ENCODE measurements at regions of chr12 and their contacts with region 1.

Region 1: DNA sequence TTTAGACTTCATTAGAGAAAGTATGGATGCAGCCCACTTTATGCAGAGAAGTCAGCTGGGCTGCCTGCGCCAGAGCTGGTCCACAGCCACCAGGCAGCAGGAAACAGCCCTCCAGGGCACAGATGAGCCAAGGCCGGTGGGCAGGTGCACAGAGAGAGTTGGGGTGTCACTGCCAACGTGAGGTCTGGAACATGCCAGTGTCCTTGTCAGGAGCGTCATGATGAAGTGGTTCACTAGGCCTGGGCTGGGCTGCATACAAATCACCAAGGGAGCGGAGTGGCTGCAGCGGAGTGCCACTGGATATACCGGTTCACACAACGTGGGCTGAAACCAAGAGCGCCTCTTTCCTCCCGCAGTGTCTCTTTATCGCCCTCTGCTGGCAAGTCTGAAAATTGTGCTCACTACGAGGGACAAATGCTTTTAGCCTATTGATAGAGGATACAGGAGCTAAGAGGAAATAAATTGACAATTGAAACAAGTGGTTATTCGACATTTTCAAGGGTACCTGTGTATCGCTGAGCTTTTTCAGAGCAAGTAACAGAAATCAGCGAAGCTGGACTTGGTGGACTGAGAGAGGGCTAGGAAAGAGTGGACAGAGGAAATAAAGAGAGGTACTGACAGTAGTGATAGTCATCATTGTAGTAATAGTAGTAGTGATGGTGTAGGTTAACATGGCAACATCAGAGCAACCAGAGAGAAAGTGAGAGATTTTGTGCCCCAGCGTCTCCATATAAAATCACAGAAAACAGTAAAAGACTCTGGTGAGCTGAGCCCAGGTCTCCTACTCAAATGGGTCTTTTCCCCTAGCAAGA is 52.0 kb upstream of the ITPR2 start:
- DNase-seq: peak; percentile 77
- ATAC-seq: peak; percentile 99
- H3K4me3 ChIP-seq: no peak overlapping the region
- H3K27ac ChIP-seq: no peak overlapping the region
- H3K4me1 ChIP-seq: no peaks in the 10 kb centered on the region
- H3K27me3 ChIP-seq: peaks cover 10% of the 10 kb centered on the region
- CTCF ChIP-seq: peak; percentile 93
- POLR2A ChIP-seq: no peak
- RAD21 ChIP-seq: peak; percentile 89

Region 2: DNA sequence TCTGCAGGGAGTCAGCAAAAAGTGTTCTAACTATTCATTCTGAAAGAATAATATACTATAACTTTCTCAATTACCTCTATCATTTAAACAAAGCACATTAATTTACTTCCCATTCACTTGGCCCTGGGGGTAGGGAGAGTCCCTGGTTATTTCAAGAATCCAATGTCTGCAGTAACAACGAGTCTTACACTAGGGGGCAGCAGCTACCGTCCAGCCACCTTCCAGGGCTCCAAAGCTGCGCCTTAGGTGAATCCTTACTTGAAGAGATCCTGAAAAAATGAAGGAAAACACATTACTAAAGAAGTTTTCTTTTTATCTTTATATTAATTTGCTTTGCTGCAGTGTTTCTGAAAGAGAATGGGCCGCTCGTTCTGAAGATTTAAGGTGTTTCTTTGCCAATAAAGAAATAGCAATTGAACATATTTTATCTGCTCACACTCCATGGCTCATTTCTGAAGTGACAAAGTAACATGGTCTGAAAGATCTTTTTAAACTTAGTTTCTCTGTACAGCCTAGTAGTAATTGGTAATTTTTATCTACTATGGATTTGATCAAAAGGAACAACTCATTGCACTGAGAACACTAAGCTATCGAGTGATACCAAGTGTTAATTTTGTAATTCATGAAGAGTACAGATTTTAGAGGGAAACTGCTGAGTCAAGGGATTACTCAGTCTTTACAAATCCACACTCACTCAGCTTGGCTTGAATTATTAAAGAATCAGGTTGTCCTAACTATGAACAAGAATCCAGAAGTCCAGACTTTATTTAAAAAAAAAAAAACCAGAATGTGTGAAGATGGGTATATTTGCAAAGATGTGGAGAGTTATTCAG is 787.7 kb before region 1 on chr12:
- CTCF ChIA-PET with region 1: no interaction called
- POLR2A ChIA-PET with region 1: no interaction called
- dilution Hi-C with region 1: no loop called
- in situ Hi-C with region 1: no loop called
- intact Hi-C with region 1: loop called (anchors 10 kb)
- DNase-seq: peak; percentile 76
- ATAC-seq: peak; percentile 99
- H3K4me3 ChIP-seq: no peak overlapping the region
- H3K27ac ChIP-seq: no peak overlapping the region
- H3K4me1 ChIP-seq: no peaks in the 10 kb centered on the region
- H3K27me3 ChIP-seq: no peaks in the 10 kb centered on the region
- CTCF ChIP-seq: peak; percentile 94
- POLR2A ChIP-seq: 0 out of 2 replicates have a peak, but pooled peaks have one; percentile 41
- RAD21 ChIP-seq: peak; percentile 94

Region 3: GRCh38 chr12:26443309-26443708 is 441.7 kb before region 1 on chr12:
- CTCF ChIA-PET with region 1: no interaction called
- POLR2A ChIA-PET with region 1: no interaction called
- dilution Hi-C with region 1: no loop called
- in situ Hi-C with region 1: no loop called
- intact Hi-C with region 1: loop called (anchors 10 kb)
- DNase-seq: no peak
- ATAC-seq: no peak
- H3K4me3 ChIP-seq: no peak overlapping the region
- H3K27ac ChIP-seq: no peak overlapping the region
- H3K4me1 ChIP-seq: no peaks in the 10 kb centered on the region
- H3K27me3 ChIP-seq: no peaks in the 10 kb centered on the region
- CTCF ChIP-seq: no peak
- POLR2A ChIP-seq: no peak
- RAD21 ChIP-seq: no peak

Region 4: GRCh38 chr12:26629864-26630263 is 255.1 kb before region 1 on chr12:
- CTCF ChIA-PET with region 1: interaction called, 3 read pairs
- POLR2A ChIA-PET with region 1: no interaction called
- dilution Hi-C with region 1: no loop called
- in situ Hi-C with region 1: no loop called
- intact Hi-C with region 1: loop called (anchors 10 kb)
- DNase-seq: peak; percentile 70
- ATAC-seq: peak; percentile 71
- H3K4me3 ChIP-seq: no peak overlapping the region
- H3K27ac ChIP-seq: no peak overlapping the region; the same call in 1 of the 2 replicates
- H3K4me1 ChIP-seq: peaks cover 11% of the 10 kb centered on the region
- H3K27me3 ChIP-seq: no peaks in the 10 kb centered on the region
- CTCF ChIP-seq: peak; percentile 75
- POLR2A ChIP-seq: no peak
- RAD21 ChIP-seq: peak; percentile 77

Region 5: DNA sequence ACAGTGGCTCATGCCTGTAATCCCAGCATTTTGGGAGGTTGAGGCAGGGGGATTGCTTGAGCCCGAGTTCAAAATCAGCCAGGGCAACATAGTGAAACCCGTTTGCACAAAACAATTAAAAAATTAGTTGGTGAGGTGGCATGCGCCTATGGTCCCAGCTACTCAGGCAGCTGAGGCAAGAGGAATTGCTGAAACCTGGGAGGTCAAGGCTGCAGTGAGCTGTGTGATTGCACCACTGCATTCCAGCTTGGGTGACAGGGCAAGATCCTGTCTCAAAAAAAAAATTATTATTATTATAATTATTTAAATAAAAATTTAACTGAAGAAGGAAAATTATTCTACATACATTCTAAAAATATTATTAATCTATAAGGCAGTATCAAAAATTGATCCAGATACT is 216.1 kb before region 1 on chr12:
- CTCF ChIA-PET with region 1: no interaction called
- POLR2A ChIA-PET with region 1: no interaction called
- dilution Hi-C with region 1: no loop called
- in situ Hi-C with region 1: no loop called
- intact Hi-C with region 1: no loop called
- DNase-seq: no peak
- ATAC-seq: no peak
- H3K4me3 ChIP-seq: no peak overlapping the region
- H3K27ac ChIP-seq: no peak overlapping the region
- H3K4me1 ChIP-seq: no peaks in the 10 kb centered on the region
- H3K27me3 ChIP-seq: no peaks in the 10 kb centered on the region
- CTCF ChIP-seq: no peak
- POLR2A ChIP-seq: no peak
- RAD21 ChIP-seq: no peak

Region 6: GRCh38 chr12:26701604-26702215 is 183.3 kb before region 1 on chr12:
- CTCF ChIA-PET with region 1: interaction called, 3 read pairs
- POLR2A ChIA-PET with region 1: no interaction called
- dilution Hi-C with region 1: no loop called
- in situ Hi-C with region 1: no loop called
- intact Hi-C with region 1: loop called (anchors 5 kb)
- DNase-seq: peak; percentile 70
- ATAC-seq: peak; percentile 54
- H3K4me3 ChIP-seq: no peak overlapping the region
- H3K27ac ChIP-seq: no peak overlapping the region
- H3K4me1 ChIP-seq: peaks cover 7% of the 10 kb centered on the region
- H3K27me3 ChIP-seq: no peaks in the 10 kb centered on the region
- CTCF ChIP-seq: peak; percentile 74
- POLR2A ChIP-seq: no peak
- RAD21 ChIP-seq: peak; percentile 73

Region 7: GRCh38 chr12:26723379-26724308 is 161.3 kb before region 1 on chr12:
- CTCF ChIA-PET with region 1: no interaction called
- POLR2A ChIA-PET with region 1: no interaction called
- dilution Hi-C with region 1: no loop called
- in situ Hi-C with region 1: no loop called
- intact Hi-C with region 1: loop called (anchors 5 kb)
- DNase-seq: peak; percentile 78
- ATAC-seq: peak; percentile 91
- H3K4me3 ChIP-seq: peak overlapping the region; percentile 17; the same call in 1 of the 2 replicates
- H3K27ac ChIP-seq: peak overlapping the region; percentile 12; the same call in 1 of the 2 replicates
- H3K4me1 ChIP-seq: peaks cover 4% of the 10 kb centered on the region
- H3K27me3 ChIP-seq: no peaks in the 10 kb centered on the region
- CTCF ChIP-seq: no peak
- POLR2A ChIP-seq: no peak
- RAD21 ChIP-seq: no peak

Region 8: GRCh38 chr12:26853303-26854030 is 31.5 kb before region 1 on chr12:
- CTCF ChIA-PET with region 1: no interaction called
- POLR2A ChIA-PET with region 1: no interaction called
- dilution Hi-C with region 1: no loop called
- in situ Hi-C with region 1: no loop called
- intact Hi-C with region 1: loop called (anchors 1 kb)
- DNase-seq: peak; percentile 56
- ATAC-seq: peak; percentile 94
- H3K4me3 ChIP-seq: no peak overlapping the region
- H3K27ac ChIP-seq: no peak overlapping the region
- H3K4me1 ChIP-seq: 0 out of 2 replicates have a peak, but pooled peaks cover 5% of the 10 kb centered on the region
- H3K27me3 ChIP-seq: peaks cover 8% of the 10 kb centered on the region; the same call in 1 of the 2 replicates
- CTCF ChIP-seq: peak; percentile 82
- POLR2A ChIP-seq: no peak
- RAD21 ChIP-seq: peak; percentile 71

Region 9: DNA sequence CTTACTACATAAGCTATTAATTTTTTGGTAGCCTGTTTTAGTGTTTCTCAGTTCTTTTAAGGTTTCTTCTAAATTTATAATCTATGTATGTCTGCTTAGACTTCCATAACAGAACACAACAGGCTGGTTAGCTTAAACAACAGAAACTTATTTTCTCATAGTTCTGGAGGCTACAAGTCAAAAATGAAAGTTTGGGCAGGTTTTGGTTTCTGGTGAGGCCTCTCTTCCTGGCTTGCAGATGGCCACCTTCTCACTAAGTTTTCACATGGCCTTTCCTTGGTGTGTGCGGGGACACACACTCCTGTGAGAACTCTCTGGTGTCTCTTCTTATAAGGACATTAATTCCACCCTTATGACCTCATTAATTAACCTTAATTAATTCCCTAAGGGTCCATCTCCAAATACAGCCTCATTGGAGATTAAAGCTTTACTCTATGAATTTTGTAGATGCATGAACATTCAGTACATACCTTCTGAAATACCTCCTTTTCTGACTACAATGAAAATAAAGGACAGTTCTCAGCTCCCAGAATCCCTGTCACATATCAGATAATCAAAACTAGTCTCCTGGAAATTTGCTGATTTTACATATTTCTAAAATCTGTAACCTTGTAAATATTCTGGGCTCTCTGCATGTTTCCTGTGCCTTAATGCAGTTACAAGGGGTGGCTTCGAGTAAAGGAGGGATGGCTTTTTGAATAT is 424.5 kb after region 1 on chr12:
- CTCF ChIA-PET with region 1: no interaction called
- POLR2A ChIA-PET with region 1: no interaction called
- dilution Hi-C with region 1: no loop called
- in situ Hi-C with region 1: no loop called
- intact Hi-C with region 1: no loop called
- DNase-seq: no peak
- ATAC-seq: no peak
- H3K4me3 ChIP-seq: no peak overlapping the region
- H3K27ac ChIP-seq: no peak overlapping the region
- H3K4me1 ChIP-seq: no peaks in the 10 kb centered on the region
- H3K27me3 ChIP-seq: no peaks in the 10 kb centered on the region
- CTCF ChIP-seq: no peak
- POLR2A ChIP-seq: no peak
- RAD21 ChIP-seq: no peak

Measured in IMR-90 (cell line).